ENCODE measurements at regions of chr5 and their contacts with region 1.

Region 1: DNA sequence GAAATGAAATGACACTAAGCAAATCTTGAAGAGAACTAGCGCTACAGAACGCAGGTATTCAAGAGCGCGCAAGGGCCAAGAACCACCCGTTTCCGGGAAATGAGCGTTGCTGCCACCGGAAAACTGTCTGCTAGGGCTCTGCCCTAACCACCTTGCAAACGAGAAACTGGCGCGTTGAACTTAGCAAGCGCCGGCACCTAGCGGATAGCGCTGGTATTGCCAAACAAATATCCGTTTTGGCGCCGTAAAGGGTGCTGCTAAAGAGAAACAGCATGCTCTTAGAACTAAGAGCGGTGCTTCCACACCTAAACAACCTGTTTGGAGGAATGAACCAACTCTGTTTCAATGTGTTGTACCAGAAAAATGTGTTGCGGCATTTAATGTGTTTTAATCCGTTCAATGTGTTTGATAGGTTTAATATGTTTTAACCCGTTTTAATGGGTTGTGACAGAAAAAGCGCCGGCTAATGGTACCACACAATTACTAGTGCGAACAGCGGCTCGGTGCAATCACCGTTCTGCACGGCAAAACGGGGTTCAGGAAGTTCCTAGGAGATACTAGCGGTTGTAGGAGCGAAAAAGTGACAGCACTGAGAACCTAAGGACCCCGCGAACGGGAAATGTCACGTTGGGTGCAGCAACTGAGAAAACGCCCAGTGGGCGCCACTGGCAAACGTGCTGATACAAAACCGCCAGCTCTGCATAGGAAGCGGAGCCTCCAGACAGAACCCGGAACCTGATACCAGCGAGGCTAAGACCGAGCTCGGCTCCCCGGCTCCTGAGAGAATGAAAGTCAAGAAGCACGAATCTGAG is at the start of gene ANXA2R:
- DNase-seq: peak; percentile 78 to 98 (median 95)
- ATAC-seq: peak; percentile 51 to 56
- H3K4me3 Mint-ChIP-seq: peak within 1 kb of the TSS; percentile 95 to 100 (median 98)
- H3K27ac Mint-ChIP-seq: peak within 1 kb of the TSS; percentile 96 to 100 (median 99)
- H3K4me1 Mint-ChIP-seq: peaks cover 19 to 61% (median 52%) of the 10 kb centered on the region in 4 donors
- H3K27me3 Mint-ChIP-seq: no peaks in the 10 kb centered on the region
- polyA plus RNA-seq, gene ANXA2R: 51.5 to 69.8 (median 54.8) TPM

Region 2: GRCh38 chr5:42824347-42824976 is 216.0 kb before region 1 on chr5:
- POLR2A ChIA-PET with region 1: no interaction called
- DNase-seq: no peak
- ATAC-seq: no peak
- H3K4me3 Mint-ChIP-seq: no peak overlapping the region
- H3K27ac Mint-ChIP-seq: no peak overlapping the region
- H3K4me1 Mint-ChIP-seq: no peaks in the 10 kb centered on the region
- H3K27me3 Mint-ChIP-seq: peaks cover 0 to 7% (median 0%) of the 10 kb centered on the region in 5 donors

Region 3: DNA sequence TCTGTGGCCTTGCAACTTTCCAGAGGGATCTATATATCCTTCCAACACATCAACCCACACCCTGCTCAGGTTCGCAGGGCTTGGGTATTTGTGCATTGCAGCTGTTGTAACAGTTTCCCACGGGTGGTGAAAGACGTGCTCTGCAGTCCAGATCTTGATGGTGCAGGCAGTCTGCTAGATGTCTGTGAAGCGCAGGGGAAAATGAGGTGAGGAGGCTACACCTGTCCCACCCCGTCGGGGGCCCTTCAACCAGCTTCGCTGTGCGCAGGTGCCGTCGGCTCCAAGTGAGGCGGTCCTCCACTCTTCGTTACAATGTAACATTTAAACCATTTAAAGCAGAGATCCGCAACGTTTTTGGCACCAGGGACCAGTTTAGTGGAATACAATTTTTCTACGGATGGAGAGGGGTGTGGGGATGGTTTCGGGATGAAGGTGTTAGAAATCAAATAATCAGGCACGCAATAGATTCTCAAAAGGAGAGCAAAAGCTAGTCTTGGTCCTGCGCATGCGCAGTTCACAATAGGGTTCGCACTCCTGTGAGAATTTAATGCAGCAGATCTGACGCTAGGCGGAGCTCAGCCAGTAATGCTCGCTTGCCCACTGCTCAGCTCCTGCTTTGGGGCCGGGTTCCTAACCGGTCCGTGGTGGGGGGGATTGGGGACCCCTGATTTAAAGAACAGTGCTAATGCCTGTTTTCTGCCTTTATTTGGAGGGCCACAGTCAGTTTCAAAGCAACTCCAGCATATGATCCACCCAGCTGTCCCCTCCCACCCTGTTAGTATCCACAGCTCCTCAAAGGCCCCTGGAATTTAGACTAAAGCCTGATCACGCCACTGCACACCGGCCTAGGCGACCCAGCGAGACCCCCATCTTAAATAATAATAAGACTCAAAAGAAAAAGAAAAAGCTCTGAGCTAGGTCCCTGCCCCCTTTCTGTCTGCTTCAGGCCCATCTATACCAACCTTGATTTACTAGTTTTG is 131.7 kb before region 1 on chr5:
- POLR2A ChIA-PET with region 1: interaction called, 136 read pairs
- DNase-seq: peak; percentile 78 to 96 (median 90)
- ATAC-seq: peak; percentile 92 to 93
- H3K4me3 Mint-ChIP-seq: peak overlapping the region; percentile 82 to 98 (median 94)
- H3K27ac Mint-ChIP-seq: peak overlapping the region; percentile 89 to 98 (median 97)
- H3K4me1 Mint-ChIP-seq: peaks cover 2 to 22% (median 18%) of the 10 kb centered on the region in 4 donors
- H3K27me3 Mint-ChIP-seq: peaks cover 0 to 3% (median 0%) of the 10 kb centered on the region in 5 donors

Region 4: DNA sequence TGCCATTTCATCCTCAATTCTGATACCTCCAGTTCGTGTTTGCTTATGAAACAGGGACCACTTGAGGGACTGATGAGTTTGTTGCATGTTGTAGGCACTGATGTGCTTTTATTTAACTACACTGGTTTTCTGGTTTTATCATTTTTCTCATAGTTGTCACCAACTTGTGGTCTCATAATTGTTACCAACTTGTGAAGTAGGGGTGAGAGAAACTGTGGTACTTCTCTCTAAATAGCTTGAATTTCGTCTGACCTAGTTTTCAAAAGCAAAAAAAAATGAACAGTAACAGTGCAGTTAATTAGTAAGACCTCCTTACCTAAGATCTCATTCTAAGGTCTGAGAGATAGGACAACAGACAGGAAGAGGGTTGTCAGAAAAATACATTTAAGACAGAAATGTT is 78.4 kb before region 1 on chr5:
- POLR2A ChIA-PET with region 1: no interaction called
- DNase-seq: peak in 1 of 10 donors; percentile 22
- ATAC-seq: no peak
- H3K4me3 Mint-ChIP-seq: peak overlapping the region in 2 of 10 donors; percentile 29 to 31
- H3K27ac Mint-ChIP-seq: peak overlapping the region in 5 of 10 donors; percentile 14 to 88 (median 39)
- H3K4me1 Mint-ChIP-seq: peaks cover 4 to 36% (median 24%) of the 10 kb centered on the region in 4 donors
- H3K27me3 Mint-ChIP-seq: no peaks in the 10 kb centered on the region

Region 5: GRCh38 chr5:42994246-42995151 is 46.0 kb before region 1 on chr5:
- POLR2A ChIA-PET with region 1: interaction called, 735 read pairs
- DNase-seq: peak; percentile 71 to 93 (median 87)
- ATAC-seq: peak; percentile 56 to 63
- H3K4me3 Mint-ChIP-seq: peak overlapping the region; percentile 87 to 100 (median 100)
- H3K27ac Mint-ChIP-seq: peak overlapping the region; percentile 97 to 100 (median 100)
- H3K4me1 Mint-ChIP-seq: peaks cover 12 to 38% (median 31%) of the 10 kb centered on the region in 4 donors
- H3K27me3 Mint-ChIP-seq: no peaks in the 10 kb centered on the region

Region 6: DNA sequence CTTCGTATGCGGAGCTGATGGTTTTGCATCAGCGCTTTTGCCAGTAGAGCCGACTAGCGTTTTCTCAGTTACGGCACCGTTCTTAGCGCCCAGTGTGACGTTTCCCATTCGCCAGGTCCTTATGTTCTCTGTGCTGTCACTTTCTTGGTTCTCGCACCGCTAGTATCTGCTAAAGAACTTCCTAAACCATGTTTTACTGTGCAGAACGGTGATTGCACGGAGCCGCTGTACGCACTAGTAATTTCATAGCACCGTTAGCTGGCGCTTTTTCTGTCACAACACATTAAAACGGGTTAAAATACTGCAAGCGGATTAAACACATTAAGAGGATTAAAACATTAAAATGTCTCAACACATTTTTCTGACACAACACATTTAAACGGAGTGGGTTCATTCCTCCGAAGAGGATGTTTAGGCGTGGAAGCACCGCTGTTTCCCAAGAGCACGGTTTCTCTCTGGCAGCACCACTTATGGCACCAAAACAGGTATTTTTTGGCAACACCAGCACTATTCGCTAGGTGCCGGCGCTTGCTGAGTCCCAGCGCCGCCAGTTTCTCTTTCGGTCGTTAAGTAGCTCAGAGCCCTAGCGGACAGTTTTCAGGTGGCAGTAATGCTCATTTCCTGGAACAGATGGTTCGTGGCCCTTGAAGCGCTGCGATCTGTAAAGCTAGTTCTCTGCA is 20.7 kb before region 1 on chr5:
- POLR2A ChIA-PET with region 1: interaction called, 904 read pairs
- DNase-seq: peak; percentile 68 to 94 (median 86)
- ATAC-seq: peak; percentile 65 to 67
- H3K4me3 Mint-ChIP-seq: peak overlapping the region; percentile 94 to 99 (median 98)
- H3K27ac Mint-ChIP-seq: peak overlapping the region; percentile 97 to 100 (median 100)
- H3K4me1 Mint-ChIP-seq: peaks cover 19 to 44% (median 40%) of the 10 kb centered on the region in 4 donors
- H3K27me3 Mint-ChIP-seq: no peaks in the 10 kb centered on the region

Region 7: DNA sequence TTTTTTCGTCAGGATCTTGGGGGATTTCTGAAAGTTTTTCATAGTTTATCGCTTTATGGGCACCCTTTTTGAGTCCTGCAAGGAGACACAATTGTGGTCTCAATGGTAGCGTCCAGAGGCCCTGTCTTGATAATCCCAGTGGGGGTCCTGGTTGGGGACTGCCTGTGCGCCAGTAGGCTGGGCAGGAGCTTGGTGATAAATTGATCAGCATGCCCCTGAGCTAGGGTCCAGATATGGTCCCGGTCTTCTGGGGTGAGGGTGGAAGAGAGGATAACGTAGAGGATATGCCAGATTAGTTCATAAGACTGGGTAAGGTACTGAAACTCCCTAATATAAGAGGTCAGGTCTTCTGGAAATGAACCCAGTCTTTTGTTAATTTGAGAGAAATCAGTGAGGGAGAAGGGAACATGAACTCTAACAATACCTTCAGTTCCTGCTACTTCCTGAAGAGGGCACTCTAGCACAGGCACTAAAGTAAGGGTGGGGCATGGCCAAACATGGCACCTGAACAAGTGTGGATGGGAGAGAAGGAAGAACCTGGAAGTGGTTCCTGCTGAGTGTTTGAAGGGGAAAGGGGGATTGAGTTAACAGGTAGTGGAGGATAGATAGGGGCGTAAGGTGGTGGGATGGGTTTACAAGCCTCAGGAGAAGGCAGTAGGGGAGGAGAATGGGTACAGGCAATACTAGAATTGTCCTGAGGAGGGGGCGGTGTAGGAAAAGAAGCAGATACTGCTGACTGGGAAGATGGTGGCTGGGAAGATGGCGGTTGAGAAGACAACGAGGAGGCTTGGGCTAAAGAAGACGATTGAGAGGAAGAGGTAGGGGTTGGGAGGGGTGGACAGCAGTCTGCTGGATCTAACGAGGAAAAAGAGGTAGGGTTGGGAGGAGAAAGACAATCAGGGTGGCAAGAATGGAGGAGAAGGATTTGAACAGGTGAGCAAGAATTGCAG is 33.4 kb after region 1 on chr5:
- POLR2A ChIA-PET with region 1: interaction called, 619 read pairs
- DNase-seq: peak in 9 of 10 donors; percentile 24 to 77 (median 62)
- ATAC-seq: peak; percentile 67 to 74
- H3K4me3 Mint-ChIP-seq: peak overlapping the region in 1 of 10 donors; percentile 57
- H3K27ac Mint-ChIP-seq: peak overlapping the region; percentile 18 to 83 (median 70)
- H3K4me1 Mint-ChIP-seq: peaks cover 31 to 66% (median 56%) of the 10 kb centered on the region in 4 donors
- H3K27me3 Mint-ChIP-seq: no peaks in the 10 kb centered on the region

Region 8: GRCh38 chr5:43120720-43121564 is 80.4 kb after region 1 on chr5 and contains the start of gene ZNF131:
- POLR2A ChIA-PET with region 1: interaction called, 148 read pairs
- DNase-seq: peak; percentile 95 to 99 (median 97)
- ATAC-seq: peak; percentile 77 to 86
- H3K4me3 Mint-ChIP-seq: peak within 1 kb of the TSS; percentile 89 to 100 (median 94)
- H3K27ac Mint-ChIP-seq: peak within 1 kb of the TSS; percentile 93 to 99 (median 98)
- H3K4me1 Mint-ChIP-seq: peaks cover 15 to 45% (median 39%) of the 10 kb centered on the region in 4 donors
- H3K27me3 Mint-ChIP-seq: no peaks in the 10 kb centered on the region
- polyA plus RNA-seq, gene ZNF131: 51.8 to 57.1 (median 55.5) TPM

Region 9: DNA sequence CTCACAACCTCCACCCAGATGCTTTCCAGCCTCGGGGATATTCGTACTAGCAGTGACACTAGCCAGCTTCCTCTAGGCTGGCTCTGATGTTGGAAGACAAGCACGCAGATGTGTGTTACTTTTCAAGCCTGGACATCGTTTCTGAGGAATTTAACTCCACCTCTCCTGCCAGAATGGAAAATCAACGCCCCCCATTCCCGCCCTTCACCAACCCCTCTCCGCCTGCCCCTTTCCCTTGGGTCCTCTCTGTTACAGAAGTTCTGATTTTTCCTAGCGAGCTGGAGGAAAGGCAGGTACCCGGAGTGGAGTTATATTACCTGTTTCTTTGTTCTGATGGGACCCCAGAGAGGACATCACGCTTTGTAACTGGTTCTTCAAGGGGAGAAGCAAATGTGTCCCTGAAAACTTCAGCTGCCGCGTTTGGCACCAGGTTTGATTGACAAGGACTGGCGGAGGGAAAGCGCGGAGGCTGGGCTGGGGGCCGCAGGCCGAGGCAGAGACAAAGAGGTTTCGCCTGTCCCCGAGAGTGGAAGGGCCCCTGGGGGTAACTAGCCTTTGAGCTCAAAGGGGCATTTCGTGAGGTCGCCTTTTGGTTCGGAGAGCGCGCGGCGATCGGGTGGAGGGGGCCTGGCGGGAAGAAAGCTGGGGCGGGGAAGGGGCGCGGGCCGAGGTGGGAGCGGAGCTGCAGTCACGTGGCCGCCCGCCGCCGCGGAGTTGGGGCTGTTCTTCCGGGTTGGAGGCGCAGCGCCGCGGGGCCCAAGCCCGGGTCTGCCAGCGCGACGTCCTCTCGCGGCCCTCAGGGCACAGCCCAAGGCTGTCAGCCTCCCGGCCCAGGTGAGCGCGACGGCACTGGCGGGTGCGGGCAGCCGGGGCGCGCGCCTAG is 562.2 kb after region 1 on chr5 and contains the start of gene NNT:
- POLR2A ChIA-PET with region 1: interaction called, 12 read pairs
- DNase-seq: peak; percentile 67 to 86 (median 76)
- ATAC-seq: peak; percentile 79 to 85
- H3K4me3 Mint-ChIP-seq: peak within 1 kb of the TSS; percentile 91 to 100 (median 94)
- H3K27ac Mint-ChIP-seq: peak within 1 kb of the TSS; percentile 91 to 98 (median 94)
- H3K4me1 Mint-ChIP-seq: peaks cover 30 to 70% (median 55%) of the 10 kb centered on the region in 4 donors
- H3K27me3 Mint-ChIP-seq: no peaks in the 10 kb centered on the region
- polyA plus RNA-seq, gene NNT: 38.8 to 52.7 (median 49.5) TPM